ENCODE measurements at regions of chr15 and their contacts with region 1.

Region 1: DNA sequence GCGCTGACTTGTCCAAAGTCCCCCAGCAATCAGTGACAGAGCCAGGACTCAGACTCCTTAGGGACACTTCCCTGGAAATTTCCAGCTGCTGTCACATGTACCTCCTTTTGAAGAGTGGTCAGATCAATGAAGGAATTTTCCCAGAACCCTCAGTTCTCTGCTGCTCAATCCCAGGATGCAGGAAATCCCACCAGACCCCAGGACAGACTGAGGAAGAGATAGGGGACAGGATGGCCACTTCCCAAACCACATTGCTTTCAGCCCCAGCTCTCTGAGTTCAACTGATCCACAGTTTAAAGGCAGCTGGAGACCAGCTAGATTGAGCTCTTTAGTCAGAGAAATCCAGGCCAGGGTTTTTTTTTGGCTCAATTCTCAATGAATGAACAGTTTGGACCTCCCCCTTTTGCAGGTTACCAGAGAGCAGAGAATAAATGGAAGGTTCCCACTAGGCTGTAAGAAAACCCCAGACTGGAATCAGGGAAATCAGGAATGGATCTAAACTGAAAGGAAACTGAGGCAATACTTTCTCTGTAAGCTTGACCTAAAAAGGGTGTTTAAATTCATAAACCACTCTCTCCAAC is 1.5 kb downstream of the CYP1A1 start:
- DNase-seq: peak; percentile 17 to 49
- H3K4me3 ChIP-seq: no peak overlapping the region
- H3K27ac ChIP-seq: no peak overlapping the region
- H3K4me1 ChIP-seq: no peaks in the 10 kb centered on the region
- H3K27me3 ChIP-seq: no peaks in the 10 kb centered on the region
- CTCF ChIP-seq: no peak

Region 2: GRCh38 chr15:74937596-74938296 is 213.9 kb after region 1 on chr15 and contains the start of gene COX5A:
- CTCF ChIA-PET with region 1: no interaction called
- POLR2A ChIA-PET with region 1: interaction called, 10 read pairs
- intact Hi-C with region 1: no loop called
- DNase-seq: peak; percentile 90 to 95
- H3K4me3 ChIP-seq: peak within 1 kb of the TSS; percentile 90
- H3K27ac ChIP-seq: peak within 1 kb of the TSS; percentile 88
- H3K4me1 ChIP-seq: peaks cover 14% of the 10 kb centered on the region
- H3K27me3 ChIP-seq: no peaks in the 10 kb centered on the region
- CTCF ChIP-seq: no peak
- total RNA-seq, gene COX5A: 177 and 247 TPM in 2 replicates

Measured in PC-9 (cell line).